Activated CD4-positive, alpha-beta T cell treated with anti-CD3 and anti-CD28 coated beads for 36 hours (primary cell): ENCODE measurements at regions of chr15 and their contacts with region 1.

Region 1: DNA sequence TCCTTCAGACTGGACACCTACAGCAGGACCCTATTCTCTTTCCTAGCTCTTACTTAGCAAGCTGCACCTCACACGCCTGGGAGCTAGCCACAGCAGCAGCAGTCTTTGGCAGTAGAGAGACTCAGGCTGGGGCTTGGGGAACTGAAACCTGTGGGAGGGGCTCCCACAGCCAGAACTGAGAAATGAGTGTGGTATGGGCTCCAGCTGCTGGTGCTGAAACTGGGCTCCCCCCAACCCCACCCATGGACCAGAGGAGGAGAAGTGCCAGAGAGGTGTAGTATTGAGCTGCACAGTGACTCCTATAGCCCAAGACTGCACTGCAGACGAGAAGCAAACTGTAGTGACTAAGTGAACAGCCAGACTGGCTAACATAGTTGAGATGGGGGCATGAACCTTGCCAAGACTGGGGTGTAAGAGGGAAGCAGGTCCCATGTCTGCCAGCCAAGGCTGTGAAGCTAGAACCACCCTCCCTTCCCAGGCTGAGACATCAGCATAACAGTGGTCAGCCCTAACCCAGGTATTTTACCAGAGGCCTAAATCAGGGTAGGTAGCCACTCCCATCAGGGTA is 62.5 kb downstream of the MYO5A start:
- DNase-seq: peak; percentile 71
- ATAC-seq: peak; percentile 80
- H3K4me3 Mint-ChIP-seq: no peak overlapping the region
- H3K27ac Mint-ChIP-seq: peak overlapping the region; percentile 20
- H3K4me1 Mint-ChIP-seq: peaks cover 43% of the 10 kb centered on the region
- H3K27me3 Mint-ChIP-seq: no peaks in the 10 kb centered on the region

Region 2: GRCh38 chr15:52018693-52019387 is 447.4 kb before region 1 on chr15 and contains the start of gene MAPK6:
- CTCF ChIA-PET with region 1: no interaction called
- POLR2A ChIA-PET with region 1: no interaction called
- intact Hi-C with region 1: loop called in 1 of 2 experiments (anchors 10 kb)
- DNase-seq: peak; percentile 97
- ATAC-seq: peak; percentile 76
- H3K4me3 Mint-ChIP-seq: peak within 1 kb of the TSS; percentile 86
- H3K27ac Mint-ChIP-seq: peak within 1 kb of the TSS; percentile 96
- H3K4me1 Mint-ChIP-seq: peaks cover 38% of the 10 kb centered on the region
- H3K27me3 Mint-ChIP-seq: peaks cover 5% of the 10 kb centered on the region
- total RNA-seq, gene MAPK6: 27.3 to 28.1 TPM

Region 3: GRCh38 chr15:52331490-52332240 is 134.6 kb before region 1 on chr15:
- CTCF ChIA-PET with region 1: interaction called, 6 read pairs
- POLR2A ChIA-PET with region 1: no interaction called
- intact Hi-C with region 1: loop called (anchors 2 to 5 kb)
- DNase-seq: peak; percentile 66
- ATAC-seq: peak; percentile 99
- H3K4me3 Mint-ChIP-seq: no peak overlapping the region
- H3K27ac Mint-ChIP-seq: peak overlapping the region; percentile 28
- H3K4me1 Mint-ChIP-seq: peaks cover 12% of the 10 kb centered on the region
- H3K27me3 Mint-ChIP-seq: no peaks in the 10 kb centered on the region

Region 4: DNA sequence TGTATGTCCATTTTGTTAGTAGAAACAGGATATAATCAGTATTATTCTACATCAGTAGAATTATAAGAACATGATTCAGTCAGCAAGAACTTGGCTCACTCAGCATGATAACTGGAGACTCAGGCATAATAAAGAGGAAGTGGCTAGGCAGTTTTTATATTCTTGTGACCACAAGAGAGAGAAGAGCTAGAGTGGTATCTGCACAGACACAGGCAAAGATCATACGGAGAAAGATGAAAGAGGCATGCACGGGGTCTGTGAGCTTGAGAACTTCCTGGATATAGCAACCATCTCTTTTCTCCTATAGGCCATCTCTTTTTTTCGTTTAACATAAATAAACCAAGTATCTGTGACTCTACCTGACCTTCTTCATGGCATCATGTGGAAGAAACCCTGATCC is 15.7 kb after region 1 on chr15:
- CTCF ChIA-PET with region 1: interaction called, 4 read pairs
- POLR2A ChIA-PET with region 1: no interaction called
- intact Hi-C with region 1: loop called in 1 of 2 experiments (anchors 2 kb)
- DNase-seq: peak; percentile 49
- ATAC-seq: peak; percentile 94
- H3K4me3 Mint-ChIP-seq: peak overlapping the region; percentile 0
- H3K27ac Mint-ChIP-seq: peak overlapping the region; percentile 84
- H3K4me1 Mint-ChIP-seq: peaks cover 70% of the 10 kb centered on the region
- H3K27me3 Mint-ChIP-seq: no peaks in the 10 kb centered on the region